K562 (cell line): ENCODE measurements at regions of chr6 and their contacts with region 1.

Region 1: GRCh38 chr6:146884728-146885127 is 286.0 kb downstream of the ADGB start:
- DNase-seq: peak in 1 of 4 experiments; percentile 75
- ATAC-seq: peak; percentile 27
- H3K4me3 ChIP-seq: peak overlapping the region; percentile 31
- H3K27ac ChIP-seq: peak overlapping the region; percentile 89
- H3K4me1 ChIP-seq: peaks cover 45 to 83% of the 10 kb centered on the region in 2 experiments
- H3K27me3 ChIP-seq: no peaks in the 10 kb centered on the region
- CTCF ChIP-seq: no peak; a peak in 1 of 6 replicates
- EP300 ChIP-seq: no peak
- POLR2A ChIP-seq: no peak
- RAD21 ChIP-seq: no peak

Region 2: DNA sequence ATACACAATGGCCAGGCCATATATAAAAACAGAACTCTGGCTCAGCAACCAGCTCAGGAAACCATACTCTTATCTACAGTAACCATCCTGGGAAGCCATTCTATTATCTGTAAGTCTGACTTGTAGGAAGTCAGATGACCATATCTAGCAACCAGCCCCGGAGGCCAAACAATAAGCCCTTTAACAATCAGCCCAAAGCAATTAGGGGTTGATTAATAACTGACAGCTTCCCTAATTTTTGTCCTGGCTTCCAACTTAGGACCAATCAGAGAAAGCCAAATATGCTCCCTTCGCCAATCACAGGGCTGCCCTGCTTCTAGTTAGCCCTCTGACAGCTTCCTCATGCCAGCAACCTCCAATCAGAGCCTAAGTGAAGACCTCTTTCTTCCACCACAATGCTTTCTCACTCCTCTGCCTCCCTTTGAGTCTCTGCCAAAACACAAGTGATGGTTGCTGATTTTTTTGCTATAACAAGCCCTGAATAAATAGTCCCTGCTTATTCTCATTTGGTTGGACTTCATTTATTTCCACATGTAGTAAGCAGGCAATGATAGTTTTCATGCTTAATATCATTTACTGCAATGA is 281.7 kb after region 1 on chr6:
- CTCF ChIA-PET with region 1: no interaction called
- POLR2A ChIA-PET with region 1: interaction called, 4 read pairs
- in situ Hi-C with region 1: no loop called
- intact Hi-C with region 1: loop called (anchors 2 kb)
- DNase-seq: peak; percentile 68 to 92 (median 78)
- ATAC-seq: peak; percentile 84
- H3K4me3 ChIP-seq: no peak overlapping the region
- H3K27ac ChIP-seq: peak overlapping the region; percentile 79
- H3K4me1 ChIP-seq: peaks cover 6 to 29% of the 10 kb centered on the region in 2 experiments
- H3K27me3 ChIP-seq: no peaks in the 10 kb centered on the region
- CTCF ChIP-seq: no peak
- EP300 ChIP-seq: peak; percentile 94
- POLR2A ChIP-seq: no peak
- RAD21 ChIP-seq: peak; percentile 29 to 36; a peak in 2 of 4 replicates